ENCODE measurements at regions of chr3 and their contacts with region 1.

Region 1: DNA sequence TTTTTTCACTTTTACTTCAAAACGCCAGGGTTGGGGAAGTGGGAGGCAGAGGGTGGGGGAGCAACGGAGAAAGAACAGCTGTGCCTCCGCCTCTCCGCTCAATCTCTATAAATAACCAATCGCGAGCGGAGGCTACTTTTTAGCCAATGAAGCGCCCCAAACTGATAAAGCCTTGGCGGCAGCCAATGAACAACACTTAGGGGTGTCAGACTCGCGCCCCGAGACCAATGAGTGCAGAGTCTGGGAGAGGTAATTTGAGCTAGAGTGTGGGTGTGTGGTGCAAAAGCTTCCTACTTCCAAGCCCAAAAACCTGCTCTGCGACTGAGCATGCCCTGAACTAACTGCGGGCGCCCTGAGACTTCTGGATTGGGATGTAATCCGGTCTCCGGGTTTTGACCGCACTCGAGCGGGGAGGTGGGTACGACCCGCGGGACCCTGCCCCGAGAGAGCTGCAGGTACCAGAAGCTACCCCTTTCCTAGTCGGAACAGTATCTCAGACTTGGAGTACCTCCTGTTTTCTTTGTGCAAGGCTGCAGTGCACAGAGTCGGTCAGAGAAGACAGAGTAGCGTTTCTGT is 800 bp upstream of the RAP2B start:
- DNase-seq: peak; percentile 96
- ATAC-seq: peak; percentile 84
- H3K4me3 ChIP-seq: peak overlapping the region; percentile 98
- H3K27ac ChIP-seq: peak overlapping the region; percentile 97
- H3K4me1 ChIP-seq: peaks cover 11% of the 10 kb centered on the region
- H3K27me3 ChIP-seq: no peaks in the 10 kb centered on the region
- CTCF ChIP-seq: no peak
- EP300 ChIP-seq: 0 out of 4 replicates have a peak, but pooled peaks of 1 of the 2 experiments have one; percentile 21
- POLR2A ChIP-seq: no peak; the same call in 1 of the 2 replicates
- RAD21 ChIP-seq: no peak

Region 2: GRCh38 chr3:153130312-153130990 is 30.8 kb before region 1 on chr3:
- CTCF ChIA-PET with region 1: no interaction called
- POLR2A ChIA-PET with region 1: interaction called, 10 read pairs
- RAD21 ChIA-PET with region 1: interaction called, 8 read pairs
- SMC1A ChIA-PET with region 1: interaction called, 15 read pairs
- in situ Hi-C with region 1: no loop called
- intact Hi-C with region 1: no loop called
- DNase-seq: peak; percentile 72
- ATAC-seq: peak; percentile 97
- H3K4me3 ChIP-seq: no peak overlapping the region
- H3K27ac ChIP-seq: peak overlapping the region; percentile 42
- H3K4me1 ChIP-seq: peaks cover 9% of the 10 kb centered on the region; the same call in 1 of the 2 replicates
- H3K27me3 ChIP-seq: no peaks in the 10 kb centered on the region
- CTCF ChIP-seq: no peak
- EP300 ChIP-seq: peak; percentile 87 to 88
- POLR2A ChIP-seq: no peak
- RAD21 ChIP-seq: no peak

Region 3: DNA sequence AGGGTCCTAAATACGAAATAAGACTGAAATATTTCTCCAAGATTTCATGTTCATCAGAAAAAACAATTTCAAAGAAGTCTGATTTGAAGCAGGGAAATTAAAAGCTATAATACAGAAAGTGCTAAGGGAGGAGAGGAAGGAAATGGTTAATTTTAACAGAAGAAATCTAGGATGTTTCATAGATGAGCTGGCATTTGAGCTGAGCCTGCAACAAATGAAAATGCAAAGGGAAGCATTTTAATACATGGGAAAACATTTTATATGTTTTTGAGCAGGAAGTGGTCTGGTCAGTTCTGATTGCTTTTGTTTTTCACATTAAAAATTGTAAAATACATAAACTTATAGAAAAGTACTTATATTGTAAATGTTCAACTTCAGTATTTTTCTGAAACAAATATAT is 16.4 kb before region 1 on chr3:
- CTCF ChIA-PET with region 1: interaction called, 3 read pairs
- POLR2A ChIA-PET with region 1: interaction called, 7 read pairs
- RAD21 ChIA-PET with region 1: interaction called, 9 read pairs
- SMC1A ChIA-PET with region 1: interaction called, 13 read pairs
- in situ Hi-C with region 1: no loop called
- intact Hi-C with region 1: loop called (anchors 2 kb)
- DNase-seq: no peak
- ATAC-seq: no peak
- H3K4me3 ChIP-seq: no peak overlapping the region
- H3K27ac ChIP-seq: no peak overlapping the region
- H3K4me1 ChIP-seq: peaks cover 5% of the 10 kb centered on the region; the same call in 1 of the 2 replicates
- H3K27me3 ChIP-seq: no peaks in the 10 kb centered on the region
- CTCF ChIP-seq: no peak
- EP300 ChIP-seq: no peak
- POLR2A ChIP-seq: no peak
- RAD21 ChIP-seq: no peak

Region 4: GRCh38 chr3:153257673-153258351 is 96.6 kb after region 1 on chr3:
- CTCF ChIA-PET with region 1: no interaction called
- POLR2A ChIA-PET with region 1: no interaction called
- RAD21 ChIA-PET with region 1: no interaction called
- SMC1A ChIA-PET with region 1: no interaction called
- in situ Hi-C with region 1: no loop called
- intact Hi-C with region 1: no loop called
- DNase-seq: no peak
- ATAC-seq: no peak
- H3K4me3 ChIP-seq: no peak overlapping the region
- H3K27ac ChIP-seq: no peak overlapping the region
- H3K4me1 ChIP-seq: no peaks in the 10 kb centered on the region
- H3K27me3 ChIP-seq: no peaks in the 10 kb centered on the region
- CTCF ChIP-seq: no peak
- EP300 ChIP-seq: no peak
- POLR2A ChIP-seq: no peak
- RAD21 ChIP-seq: no peak

Region 5: DNA sequence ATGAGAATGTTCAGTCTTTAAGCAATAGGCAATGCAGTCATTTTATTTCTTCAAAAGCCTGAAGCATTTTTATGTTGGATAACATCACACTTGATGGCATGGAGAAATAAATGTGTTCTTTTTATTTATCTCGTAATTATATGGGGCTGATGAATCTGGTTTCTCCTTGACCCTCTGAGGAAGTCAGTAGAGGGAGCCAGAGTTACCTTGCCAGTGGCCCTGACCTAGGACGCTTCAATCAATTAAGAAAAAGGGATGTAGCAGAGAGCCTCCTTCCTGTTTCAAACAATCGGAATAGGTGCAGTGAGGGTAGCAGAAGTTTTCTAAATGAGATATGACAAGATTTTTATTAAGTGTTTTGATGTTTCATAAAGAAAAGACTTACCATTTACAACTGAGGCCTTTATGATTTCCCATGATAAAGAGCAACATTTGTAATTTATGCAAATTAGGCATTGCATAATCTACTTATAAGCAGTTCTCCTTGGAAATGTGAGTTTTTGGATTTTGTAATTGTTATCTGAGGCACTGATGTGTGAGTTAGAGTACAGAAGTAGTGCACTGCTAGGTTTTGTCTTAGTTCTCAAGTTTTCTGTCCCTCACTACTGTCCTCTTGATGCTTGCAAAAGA is 129.9 kb after region 1 on chr3:
- CTCF ChIA-PET with region 1: no interaction called
- POLR2A ChIA-PET with region 1: no interaction called
- RAD21 ChIA-PET with region 1: no interaction called
- SMC1A ChIA-PET with region 1: interaction called, 3 read pairs
- in situ Hi-C with region 1: no loop called
- intact Hi-C with region 1: loop called (anchors 5 kb)
- DNase-seq: no peak
- ATAC-seq: peak; percentile 86
- H3K4me3 ChIP-seq: no peak overlapping the region
- H3K27ac ChIP-seq: no peak overlapping the region
- H3K4me1 ChIP-seq: no peaks in the 10 kb centered on the region
- H3K27me3 ChIP-seq: no peaks in the 10 kb centered on the region
- CTCF ChIP-seq: peak; percentile 43 to 48 (median 47)
- EP300 ChIP-seq: no peak
- POLR2A ChIP-seq: no peak
- RAD21 ChIP-seq: peak; percentile 59

Region 6: DNA sequence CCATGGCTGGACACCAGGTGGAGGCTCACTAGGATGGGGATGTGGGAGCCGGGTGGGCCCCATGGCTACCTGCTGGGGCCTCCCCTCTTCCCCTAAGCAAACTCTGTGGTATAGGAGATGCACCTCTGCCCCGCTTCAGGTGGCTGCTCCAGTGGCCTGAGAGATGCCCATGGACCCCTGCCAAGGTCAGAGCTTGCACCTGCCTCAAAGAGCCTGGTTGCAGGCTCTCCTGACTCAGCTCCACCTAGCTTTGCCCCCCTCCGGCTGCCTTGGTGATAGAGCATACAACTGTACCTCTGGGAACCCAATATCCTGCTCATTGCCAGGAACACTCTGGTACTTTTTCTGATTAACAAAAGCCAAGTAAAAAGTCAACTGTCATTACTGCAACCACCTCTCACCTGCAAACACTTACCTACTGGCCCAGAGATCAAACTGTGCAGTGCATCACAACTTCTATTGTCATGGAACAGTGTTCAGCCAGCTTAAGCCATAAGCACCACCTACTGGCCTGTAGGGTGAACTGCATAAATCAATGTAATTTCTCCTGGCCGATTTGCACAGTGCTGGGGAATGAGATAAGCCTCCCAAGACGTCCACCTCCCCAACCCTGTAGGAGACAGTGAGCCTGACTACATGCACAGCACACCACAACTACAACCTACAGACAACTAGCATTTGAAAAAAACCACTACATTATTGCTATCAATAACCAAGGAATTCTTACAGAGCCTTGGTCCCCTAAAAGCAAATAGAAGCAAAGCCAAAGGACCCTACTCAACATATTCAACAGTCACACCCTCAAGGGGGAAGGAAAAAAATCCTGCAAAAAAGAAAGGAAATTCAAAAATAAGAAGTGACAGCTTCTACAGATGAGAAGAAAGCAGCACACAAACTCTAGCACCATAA is 607.6 kb after region 1 on chr3:
- CTCF ChIA-PET with region 1: interaction called, 3 read pairs
- POLR2A ChIA-PET with region 1: no interaction called
- RAD21 ChIA-PET with region 1: no interaction called
- SMC1A ChIA-PET with region 1: no interaction called
- in situ Hi-C with region 1: no loop called
- intact Hi-C with region 1: loop called (anchors 5 kb)
- DNase-seq: peak; percentile 9
- ATAC-seq: peak; percentile 98
- H3K4me3 ChIP-seq: no peak overlapping the region
- H3K27ac ChIP-seq: no peak overlapping the region
- H3K4me1 ChIP-seq: no peaks in the 10 kb centered on the region
- H3K27me3 ChIP-seq: no peaks in the 10 kb centered on the region
- CTCF ChIP-seq: peak; percentile 77 to 82 (median 79)
- EP300 ChIP-seq: no peak
- POLR2A ChIP-seq: no peak
- RAD21 ChIP-seq: peak; percentile 85

Region 7: DNA sequence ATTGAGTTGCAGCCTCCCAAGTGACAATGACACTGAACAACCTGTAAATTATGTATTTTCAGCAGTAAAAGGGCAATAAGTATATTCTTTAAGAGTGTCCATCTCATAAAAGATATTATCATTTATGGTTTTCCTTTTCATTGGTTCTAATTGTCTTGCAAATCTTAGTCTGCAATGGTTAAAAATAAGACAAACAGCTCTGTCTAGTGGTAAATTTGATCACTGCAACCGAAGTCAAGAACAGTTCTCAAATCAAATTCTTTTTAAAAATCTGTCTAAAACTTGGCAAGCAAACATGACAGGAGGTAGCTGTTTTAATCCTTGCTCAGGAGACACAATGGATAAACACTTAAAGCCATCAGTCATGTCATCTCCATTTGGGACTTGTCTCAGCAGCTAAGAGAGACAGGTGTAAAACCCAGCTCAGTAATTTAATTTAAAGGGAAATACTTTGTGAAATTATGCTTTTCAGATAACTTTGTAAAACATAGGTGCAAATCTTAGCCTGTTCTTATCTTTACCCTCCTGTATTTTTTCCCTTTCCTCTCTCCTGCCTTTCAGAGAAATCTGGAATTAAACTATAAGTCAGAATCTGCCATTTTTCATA is 809.6 kb after region 1 on chr3:
- CTCF ChIA-PET with region 1: interaction called, 10 read pairs
- POLR2A ChIA-PET with region 1: no interaction called
- RAD21 ChIA-PET with region 1: interaction called, 5 read pairs
- SMC1A ChIA-PET with region 1: interaction called, 4 read pairs
- in situ Hi-C with region 1: no loop called
- intact Hi-C with region 1: no loop called
- DNase-seq: no peak
- ATAC-seq: peak; percentile 27; the same call in 2 of the 3 replicates
- H3K4me3 ChIP-seq: no peak overlapping the region
- H3K27ac ChIP-seq: no peak overlapping the region
- H3K4me1 ChIP-seq: peaks cover 37% of the 10 kb centered on the region
- H3K27me3 ChIP-seq: no peaks in the 10 kb centered on the region
- CTCF ChIP-seq: peak; percentile 41 to 63 (median 49)
- EP300 ChIP-seq: no peak
- POLR2A ChIP-seq: no peak
- RAD21 ChIP-seq: peak; percentile 60

Measured in GM12878 (cell line).